ENCODE measurements at regions of chr2 and their contacts with region 1.

Region 1: GRCh38 chr2:121736462-121737341 is at the start of gene NIFK:
- DNase-seq: peak; percentile 100
- ATAC-seq: peak; percentile 86
- H3K4me3 Mint-ChIP-seq: peak within 1 kb of the TSS; percentile 93
- H3K27ac Mint-ChIP-seq: peak within 1 kb of the TSS; percentile 97
- H3K4me1 Mint-ChIP-seq: peaks cover 33% of the 10 kb centered on the region
- H3K27me3 Mint-ChIP-seq: peaks cover 3% of the 10 kb centered on the region
- total RNA-seq, gene NIFK: 62.4 to 73.2 TPM

Region 2: GRCh38 chr2:121634354-121635307 is 102.1 kb before region 1 on chr2:
- POLR2A ChIA-PET with region 1: no interaction called
- DNase-seq: no peak
- ATAC-seq: peak; percentile 61
- H3K4me3 Mint-ChIP-seq: peak overlapping the region; percentile 11
- H3K27ac Mint-ChIP-seq: peak overlapping the region; percentile 47
- H3K4me1 Mint-ChIP-seq: peaks cover 26% of the 10 kb centered on the region
- H3K27me3 Mint-ChIP-seq: no peaks in the 10 kb centered on the region

Region 3: GRCh38 chr2:121649596-121650314 is 86.9 kb before region 1 on chr2:
- POLR2A ChIA-PET with region 1: interaction called, 22 read pairs
- DNase-seq: peak; percentile 83
- ATAC-seq: peak; percentile 94
- H3K4me3 Mint-ChIP-seq: peak overlapping the region; percentile 96
- H3K27ac Mint-ChIP-seq: peak overlapping the region; percentile 99
- H3K4me1 Mint-ChIP-seq: peaks cover 46% of the 10 kb centered on the region
- H3K27me3 Mint-ChIP-seq: no peaks in the 10 kb centered on the region

Region 4: GRCh38 chr2:121699421-121700333 is 37.0 kb before region 1 on chr2:
- POLR2A ChIA-PET with region 1: interaction called, 20 read pairs
- DNase-seq: peak; percentile 86
- ATAC-seq: peak; percentile 98
- H3K4me3 Mint-ChIP-seq: peak overlapping the region; percentile 95
- H3K27ac Mint-ChIP-seq: peak overlapping the region; percentile 99
- H3K4me1 Mint-ChIP-seq: peaks cover 47% of the 10 kb centered on the region
- H3K27me3 Mint-ChIP-seq: no peaks in the 10 kb centered on the region

Region 5: DNA sequence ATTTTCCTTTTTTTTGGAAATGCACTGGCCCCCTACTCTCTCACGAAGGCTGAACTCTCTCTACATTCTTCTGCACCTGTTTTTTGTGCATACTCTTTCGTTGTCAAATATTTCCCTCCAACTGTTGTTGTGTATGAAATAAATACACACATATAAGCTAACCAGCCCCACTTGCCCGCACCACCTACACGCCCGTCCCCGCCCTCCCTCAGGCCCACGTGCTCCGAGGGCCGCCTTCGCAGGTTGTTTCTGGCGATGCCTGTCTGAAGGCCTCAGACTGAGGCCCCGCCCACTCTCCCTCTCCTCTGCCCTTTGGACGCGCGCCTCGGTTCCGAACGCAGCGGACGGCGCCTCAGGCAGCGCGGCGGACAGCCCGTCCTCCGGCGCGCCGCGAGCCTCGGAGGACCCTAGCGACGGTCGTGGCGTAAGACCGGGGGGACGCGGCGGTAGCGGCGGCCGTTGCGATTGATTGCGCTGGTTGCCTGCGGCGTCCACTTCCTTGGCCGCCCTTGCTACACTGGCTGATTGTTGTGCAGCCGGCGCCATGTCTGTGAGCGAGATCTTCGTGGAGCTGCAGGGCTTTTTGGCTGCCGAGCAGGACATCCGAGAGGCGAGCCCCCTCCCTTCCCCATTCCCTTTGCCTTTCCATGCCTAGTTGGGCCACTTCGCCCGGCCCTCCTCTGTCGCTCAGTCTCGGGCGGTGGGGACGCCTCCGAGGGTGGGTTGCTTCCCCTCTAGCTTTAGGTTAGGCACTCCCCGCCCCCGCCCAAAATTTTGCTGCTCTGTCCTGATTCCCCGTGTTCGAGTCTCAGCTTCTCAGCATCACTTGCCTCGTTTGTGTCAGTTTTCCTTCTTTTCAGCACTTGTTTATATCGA is 18.8 kb after region 1 on chr2 and contains the start of gene TSN:
- POLR2A ChIA-PET with region 1: interaction called, 18 read pairs
- DNase-seq: peak; percentile 98
- ATAC-seq: peak; percentile 99
- H3K4me3 Mint-ChIP-seq: peak within 1 kb of the TSS; percentile 100
- H3K27ac Mint-ChIP-seq: peak within 1 kb of the TSS; percentile 93
- H3K4me1 Mint-ChIP-seq: peaks cover 23% of the 10 kb centered on the region
- H3K27me3 Mint-ChIP-seq: no peaks in the 10 kb centered on the region
- total RNA-seq, gene TSN: 50.0 to 51.5 TPM

Measured in activated naive CD8-positive, alpha-beta T cell treated with anti-CD3 and anti-CD28 coated beads, Interleukin-2, amount 10 ng/mL, durations not matched to agents 7 days and 5 days (primary cell).